ENCODE measurements at regions of chr4 and their contacts with region 1.

Region 1: GRCh38 chr4:41418444-41418843 is 119.5 kb upstream of the LIMCH1 start:
- DNase-seq: peak; percentile 47 to 80 (median 71)
- H3K4me3 ChIP-seq: peak overlapping the region in 45 of 59 donors; percentile 2 to 56 (median 29)
- H3K27ac ChIP-seq: peak overlapping the region; percentile 1 to 93 (median 84)
- H3K27me3 ChIP-seq: no peaks in the 10 kb centered on the region
- CTCF ChIP-seq: peak in 1 of 56 donors; percentile 14

Region 2: GRCh38 chr4:41369697-41370096 is 48.7 kb before region 1 on chr4:
- intact Hi-C with region 1: loop called (anchors 5 kb)
- DNase-seq: peak in 8 of 10 donors; percentile 34 to 70 (median 56)
- H3K4me3 ChIP-seq: peak overlapping the region in 4 of 59 donors; percentile 0 to 17 (median 10)
- H3K27ac ChIP-seq: peak overlapping the region; percentile 11 to 100 (median 97)
- H3K27me3 ChIP-seq: no peaks in the 10 kb centered on the region
- CTCF ChIP-seq: no peak

Region 3: GRCh38 chr4:41525129-41525528 is 106.7 kb after region 1 on chr4:
- intact Hi-C with region 1: no loop called
- DNase-seq: no peak
- H3K4me3 ChIP-seq: no peak overlapping the region
- H3K27ac ChIP-seq: peak overlapping the region in 1 of 59 donors; percentile 5
- H3K27me3 ChIP-seq: no peaks in the 10 kb centered on the region
- CTCF ChIP-seq: no peak

Region 4: DNA sequence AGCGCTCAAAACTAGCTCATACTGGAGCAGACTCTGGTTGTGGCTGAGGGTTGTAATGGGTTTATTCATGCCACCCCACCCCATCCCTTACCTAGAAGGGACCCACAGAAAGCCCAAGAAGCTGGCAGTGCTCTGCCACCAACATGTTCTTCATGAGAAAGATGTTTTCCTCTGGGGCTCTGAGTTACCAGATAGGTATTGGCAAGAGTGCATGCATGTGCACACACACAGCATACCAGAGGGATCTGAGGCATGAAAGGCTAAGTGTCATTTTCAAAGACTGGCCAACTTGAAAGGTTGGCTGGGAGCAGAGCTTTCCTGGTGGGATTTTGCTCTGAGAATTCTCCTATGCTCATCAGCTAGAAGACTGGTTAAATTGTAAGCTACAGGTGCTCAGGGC is 264.9 kb after region 1 on chr4:
- intact Hi-C with region 1: no loop called
- DNase-seq: no peak
- H3K4me3 ChIP-seq: no peak overlapping the region
- H3K27ac ChIP-seq: peak overlapping the region in 7 of 59 donors; percentile 1 to 49 (median 9)
- H3K27me3 ChIP-seq: no peaks in the 10 kb centered on the region
- CTCF ChIP-seq: no peak